ENCODE measurements at regions of chr2 and their contacts with region 1.

Region 1: DNA sequence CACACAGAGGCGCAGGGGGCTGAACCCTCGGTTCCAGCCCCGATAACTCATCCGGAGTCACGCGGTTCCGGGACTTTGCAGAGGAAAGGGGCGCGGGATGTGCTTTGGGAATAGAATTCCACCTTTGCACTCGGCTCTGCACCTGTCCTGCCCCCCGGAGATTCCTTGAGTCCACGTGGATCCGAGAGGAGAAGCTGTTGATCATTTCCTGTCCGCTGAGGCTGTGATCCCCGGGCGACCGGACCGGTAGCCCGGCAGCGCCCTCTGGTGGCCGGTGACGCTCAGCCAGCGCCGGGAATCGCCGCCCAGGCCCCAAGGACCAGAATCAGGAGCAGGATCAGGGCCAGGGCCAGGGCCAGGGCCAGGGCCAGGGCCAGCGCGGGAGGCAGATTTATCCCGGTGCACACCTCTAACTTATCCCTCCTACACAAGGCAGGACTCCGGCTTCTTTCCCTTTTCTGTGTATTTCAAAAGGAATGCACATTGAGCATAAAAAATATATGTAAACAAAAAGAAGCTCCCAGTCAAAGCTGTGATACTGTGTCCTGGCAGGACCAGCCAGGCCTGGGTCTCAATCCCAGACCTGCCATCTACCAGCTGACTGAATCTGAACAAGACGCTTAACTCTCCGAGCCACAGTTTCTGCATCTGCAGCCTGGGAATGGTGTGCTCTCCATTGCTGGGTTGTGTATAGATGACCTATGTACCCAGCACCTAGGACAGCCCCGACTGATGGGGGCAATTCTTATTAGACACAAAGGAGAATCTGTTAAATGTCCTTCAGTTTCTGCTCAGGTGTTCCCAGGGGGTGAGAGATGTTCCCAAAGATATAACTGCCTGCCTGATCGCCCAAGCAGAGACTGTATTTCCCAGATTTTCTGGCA is 8.5 kb upstream of the SPATA3 start:
- DNase-seq: no peak
- H3K4me3 ChIP-seq: peak overlapping the region; percentile 52
- CTCF ChIP-seq: peak; percentile 97

Region 2: GRCh38 chr2:230824406-230824978 is 162.9 kb before region 1 on chr2:
- CTCF ChIA-PET with region 1: interaction called, 141 read pairs
- POLR2A ChIA-PET with region 1: no interaction called
- DNase-seq: peak; percentile 24
- H3K4me3 ChIP-seq: peak overlapping the region; percentile 49
- CTCF ChIP-seq: peak; percentile 58

Region 3: DNA sequence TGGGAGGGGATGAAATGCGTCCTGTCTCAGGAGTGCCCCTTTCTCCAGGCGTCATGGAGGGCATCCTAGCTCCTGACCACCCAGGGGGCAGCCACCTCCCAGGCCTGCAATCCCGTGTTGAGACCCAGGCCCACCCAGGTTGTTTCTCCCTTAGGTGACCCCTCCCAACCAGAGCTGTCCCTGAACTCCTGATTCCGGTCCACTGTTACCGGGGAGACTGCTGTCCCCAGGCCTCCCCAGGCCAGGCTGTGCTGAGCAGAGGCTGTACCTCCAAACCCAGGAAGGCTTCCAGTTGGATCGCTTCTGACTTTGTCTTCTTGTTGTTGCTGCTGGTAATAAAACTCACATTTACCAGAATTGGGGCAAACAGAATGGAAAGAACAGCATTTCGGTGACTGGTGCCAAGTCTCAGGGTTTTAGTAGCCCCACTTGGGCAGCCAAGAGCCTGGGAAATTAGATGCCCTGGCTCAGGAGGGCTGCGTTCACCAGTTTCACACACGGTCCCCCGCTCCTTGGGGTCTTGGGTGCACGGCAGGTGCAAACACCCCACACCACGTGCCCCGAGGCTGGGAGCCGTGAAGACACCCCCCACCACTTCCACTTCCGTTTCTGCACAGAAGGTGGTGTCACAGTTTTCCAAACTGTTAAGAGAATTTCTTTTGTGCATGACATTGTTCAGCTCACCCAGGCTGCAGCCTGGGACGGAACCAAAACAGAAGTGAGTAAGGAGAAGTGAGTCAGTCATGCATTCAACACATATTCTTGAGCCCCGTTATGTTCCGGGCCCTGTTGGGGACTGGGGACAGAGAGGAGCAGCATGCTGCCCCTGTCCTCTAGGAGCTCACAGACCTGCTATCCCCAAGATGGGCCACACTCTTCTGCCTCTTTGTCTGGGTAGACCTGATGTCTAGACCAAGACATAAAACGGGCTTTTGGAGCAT is 93.3 kb before region 1 on chr2:
- CTCF ChIA-PET with region 1: interaction called, 330 read pairs
- POLR2A ChIA-PET with region 1: no interaction called
- DNase-seq: no peak
- H3K4me3 ChIP-seq: no peak overlapping the region
- CTCF ChIP-seq: no peak

Region 4: GRCh38 chr2:230964136-230964730 is 23.1 kb before region 1 on chr2:
- CTCF ChIA-PET with region 1: interaction called, 11 read pairs
- POLR2A ChIA-PET with region 1: interaction called, 3 read pairs
- DNase-seq: no peak
- H3K4me3 ChIP-seq: no peak overlapping the region
- CTCF ChIP-seq: no peak

Region 5: DNA sequence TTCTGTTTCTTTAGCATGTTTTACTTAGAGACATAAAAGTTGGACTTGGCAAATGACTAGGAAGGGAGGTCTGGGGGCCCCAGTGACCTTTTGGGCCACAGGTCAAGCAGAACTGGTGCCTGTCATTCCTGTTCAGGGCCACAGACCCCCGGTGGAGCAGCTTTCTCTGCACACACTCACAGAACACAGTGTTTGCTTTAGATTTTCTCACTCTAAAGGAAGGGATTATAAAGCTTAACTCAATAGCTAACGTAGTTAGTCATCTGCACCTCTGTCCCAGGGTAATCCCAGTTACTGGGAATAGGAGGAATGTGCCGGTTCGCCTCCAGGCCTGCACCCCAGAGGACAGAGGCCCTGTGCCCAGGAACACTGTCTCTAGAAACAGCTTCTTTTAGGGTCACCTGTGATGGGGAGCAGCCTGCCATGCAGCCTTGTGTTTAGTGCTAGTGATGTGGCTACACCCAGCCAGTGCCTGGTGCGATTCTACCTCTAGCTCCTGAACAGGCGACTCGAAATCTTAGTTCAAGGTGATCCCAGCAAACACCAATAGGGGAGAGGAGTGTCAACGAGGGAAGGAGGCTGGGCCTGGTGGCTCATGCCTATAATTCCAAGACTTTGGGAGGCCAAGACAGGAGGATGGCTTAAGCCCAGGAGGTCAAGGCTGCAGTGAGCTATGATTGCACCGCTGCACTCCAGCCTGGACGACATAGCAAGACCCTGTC is 20.1 kb after region 1 on chr2:
- CTCF ChIA-PET with region 1: interaction called, 11 read pairs
- POLR2A ChIA-PET with region 1: no interaction called
- DNase-seq: no peak
- H3K4me3 ChIP-seq: no peak overlapping the region
- CTCF ChIP-seq: no peak

Region 6: DNA sequence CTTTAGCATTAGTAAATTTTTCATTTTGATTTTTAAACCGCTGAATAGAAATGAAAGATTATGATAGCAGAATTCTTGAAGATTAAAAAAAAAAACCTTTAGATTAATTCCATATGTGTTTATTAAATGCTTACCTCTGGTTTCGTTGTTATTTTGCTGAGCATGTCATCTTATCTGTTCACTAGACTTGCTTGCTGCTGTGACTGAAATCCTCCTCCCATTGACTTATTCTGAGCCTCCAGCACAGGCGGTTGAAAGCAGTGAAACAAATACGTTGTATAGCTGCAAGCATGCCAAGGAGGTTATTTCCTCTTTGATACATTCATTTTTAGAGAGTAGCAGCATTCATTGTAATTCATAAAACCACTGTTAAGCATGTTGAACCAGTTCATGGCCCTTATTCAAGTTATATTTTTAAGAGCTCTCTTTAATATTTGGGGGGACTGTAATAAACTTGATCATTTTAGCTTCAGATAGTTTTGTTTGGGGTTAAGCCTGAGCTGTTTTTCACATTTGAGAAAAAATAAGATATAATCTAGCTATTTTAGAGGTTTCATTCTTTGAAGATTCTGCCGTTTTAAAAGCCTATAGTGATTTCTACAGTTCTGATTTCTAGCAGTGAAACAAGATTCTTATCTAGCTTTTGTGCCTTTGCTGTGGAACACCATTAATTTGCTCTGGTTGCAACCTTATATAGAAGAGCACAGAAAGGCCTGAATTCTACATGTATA is 137.6 kb after region 1 on chr2 and contains the start of gene HTR2B:
- CTCF ChIA-PET with region 1: no interaction called
- POLR2A ChIA-PET with region 1: no interaction called
- DNase-seq: no peak
- H3K4me3 ChIP-seq: no peak within 1 kb of the TSS
- CTCF ChIP-seq: no peak

Region 7: DNA sequence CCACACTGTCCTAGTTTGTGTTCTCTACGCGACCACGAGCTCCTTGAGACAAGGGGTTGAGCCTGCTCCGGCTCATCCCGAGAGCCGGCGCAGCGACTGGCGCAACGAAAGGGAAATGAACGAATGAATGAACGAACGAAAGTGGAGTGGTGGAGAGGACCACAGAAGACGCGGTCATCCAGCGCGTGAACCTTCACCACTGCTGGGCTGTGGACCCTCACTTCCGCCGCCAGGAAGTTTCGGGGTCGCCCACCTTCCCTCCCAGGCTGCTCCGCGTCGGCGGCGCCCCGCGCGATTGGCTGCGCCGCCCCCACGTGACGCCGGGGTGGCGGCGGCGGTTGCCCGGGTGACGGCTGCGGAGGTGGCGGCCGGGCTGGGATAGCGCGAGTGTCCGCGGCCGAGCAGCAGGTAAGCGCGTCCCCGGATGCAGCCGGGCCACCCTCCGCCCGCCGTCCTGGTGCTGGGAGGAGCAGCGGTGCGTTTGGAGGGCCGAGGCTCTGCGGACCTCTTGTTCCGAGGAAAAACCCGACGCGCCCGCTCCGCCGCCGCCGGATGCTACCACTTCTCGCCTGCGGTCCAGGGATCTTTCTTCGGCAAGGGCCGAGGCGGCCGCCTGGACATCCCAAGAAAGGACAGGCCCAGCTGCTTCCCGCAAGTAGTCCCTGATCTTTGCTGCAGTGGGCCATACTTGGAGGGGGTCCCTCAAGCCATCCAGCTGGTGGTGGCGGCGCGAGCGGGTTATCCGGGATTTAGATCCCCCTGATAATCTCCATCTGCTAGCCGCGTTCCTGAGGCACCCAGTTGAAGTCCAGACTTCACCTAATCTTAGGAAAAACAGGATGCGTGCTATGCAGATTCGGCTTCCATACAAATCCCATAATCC is 211.2 kb after region 1 on chr2 and contains the start of gene ARMC9:
- CTCF ChIA-PET with region 1: no interaction called
- POLR2A ChIA-PET with region 1: no interaction called
- DNase-seq: no peak
- H3K4me3 ChIP-seq: peak within 1 kb of the TSS; percentile 98
- CTCF ChIP-seq: no peak